Natural killer cell (primary cell): ENCODE measurements at regions of chr1 and their contacts with region 1.

Region 1: GRCh38 chr1:32400876-32401631 is 6.8 kb upstream of the BSDC1 start:
- DNase-seq: peak; percentile 23 to 73
- ATAC-seq: peak; percentile 70 to 88 (median 78)
- H3K4me3 ChIP-seq: no peak overlapping the region
- H3K4me3 Mint-ChIP-seq: no peak overlapping the region
- H3K27ac ChIP-seq: no peak overlapping the region
- H3K27ac Mint-ChIP-seq: no peak overlapping the region
- H3K4me1 ChIP-seq: peaks cover 4% of the 10 kb centered on the region
- H3K4me1 Mint-ChIP-seq: no peaks in the 10 kb centered on the region
- H3K27me3 ChIP-seq: no peaks in the 10 kb centered on the region
- H3K27me3 Mint-ChIP-seq: peaks cover 0 to 10% of the 10 kb centered on the region in 2 donors
- CTCF ChIP-seq: peak; percentile 69

Region 2: GRCh38 chr1:32413507-32414185 is 12.6 kb after region 1 on chr1:
- intact Hi-C with region 1: loop called (anchors 2 kb)
- DNase-seq: peak; percentile 48 to 92
- ATAC-seq: peak; percentile 81 to 85 (median 85)
- H3K4me3 ChIP-seq: no peak overlapping the region
- H3K4me3 Mint-ChIP-seq: no peak overlapping the region
- H3K27ac ChIP-seq: no peak overlapping the region
- H3K27ac Mint-ChIP-seq: no peak overlapping the region
- H3K4me1 ChIP-seq: no peaks in the 10 kb centered on the region
- H3K4me1 Mint-ChIP-seq: peaks cover 0 to 4% of the 10 kb centered on the region in 2 donors
- H3K27me3 ChIP-seq: no peaks in the 10 kb centered on the region
- H3K27me3 Mint-ChIP-seq: peaks cover 8 to 23% of the 10 kb centered on the region in 2 donors
- CTCF ChIP-seq: peak; percentile 90